Pancreas (tissue), 10 donors: ENCODE measurements at regions of chr2 and their contacts with region 1.

Region 1: GRCh38 chr2:13006829-13007717 is 290.3 kb downstream of the TRIB2 start:
- DNase-seq: peak in 4 of 6 donors; percentile 26 to 68 (median 32)
- ATAC-seq: peak; percentile 84 to 96 (median 92)
- H3K4me3 ChIP-seq: no peak overlapping the region
- H3K27ac ChIP-seq: no peak overlapping the region
- H3K4me1 ChIP-seq: peaks cover 0 to 12% (median 4%) of the 10 kb centered on the region in 3 donors
- H3K27me3 ChIP-seq: no peaks in the 10 kb centered on the region
- CTCF ChIP-seq: peak; percentile 64 to 91 (median 85)

Region 2: GRCh38 chr2:11829947-11830707 is 1176.9 kb before region 1 on chr2:
- intact Hi-C with region 1: loop called in 1 of 3 experiments (anchors 10 kb)
- DNase-seq: peak in 5 of 6 donors; percentile 25 to 72 (median 63)
- ATAC-seq: peak; percentile 67 to 91 (median 88)
- H3K4me3 ChIP-seq: peak overlapping the region in 2 of 4 donors; percentile 6 to 8
- H3K27ac ChIP-seq: peak overlapping the region; percentile 13 to 84 (median 64)
- H3K4me1 ChIP-seq: peaks cover 12 to 22% (median 21%) of the 10 kb centered on the region in 3 donors
- H3K27me3 ChIP-seq: no peaks in the 10 kb centered on the region
- CTCF ChIP-seq: no peak

Region 3: DNA sequence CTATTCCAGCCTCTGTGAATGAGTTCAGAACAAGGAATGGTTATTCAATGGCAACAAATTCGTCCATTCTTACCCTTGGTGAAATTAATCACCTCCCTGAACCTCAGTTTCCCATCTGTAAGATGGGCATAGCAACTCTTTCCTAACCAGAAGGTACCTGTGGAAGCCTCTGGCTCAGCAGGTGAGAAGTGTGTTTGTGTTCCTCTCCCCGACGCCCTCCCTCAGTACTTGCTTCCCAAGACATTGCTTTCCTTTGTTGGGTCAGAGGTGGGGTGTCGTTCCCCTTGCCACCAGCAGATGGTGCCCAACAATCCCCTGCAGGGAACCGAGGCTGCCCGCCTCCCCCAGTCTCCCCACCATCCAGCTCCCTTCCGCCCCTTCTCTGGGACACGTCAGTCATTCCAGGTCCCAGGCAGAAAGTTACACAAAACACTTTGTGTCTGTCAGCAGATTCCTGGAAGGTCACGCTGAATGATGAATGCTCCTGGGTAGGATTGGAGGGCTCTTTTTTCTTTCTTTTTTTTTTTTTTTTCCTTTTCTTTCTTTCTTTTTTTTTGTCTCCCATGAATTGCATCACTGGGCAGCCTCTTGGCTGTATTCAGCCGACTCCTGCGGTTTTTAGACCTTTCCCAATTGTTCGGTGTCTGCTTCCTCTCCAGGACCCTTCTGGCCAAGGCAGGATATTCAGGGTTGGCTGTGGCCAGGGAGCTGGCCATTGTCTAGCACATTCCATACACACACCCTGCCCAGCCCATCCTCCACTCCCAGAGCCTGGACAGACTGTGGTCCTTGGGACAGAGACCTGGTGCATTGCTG is 1143.4 kb before region 1 on chr2:
- intact Hi-C with region 1: loop called in 1 of 3 experiments (anchors 10 kb)
- DNase-seq: peak; percentile 61 to 84 (median 78)
- ATAC-seq: peak; percentile 87 to 98 (median 98)
- H3K4me3 ChIP-seq: no peak overlapping the region
- H3K27ac ChIP-seq: no peak overlapping the region
- H3K4me1 ChIP-seq: peaks cover 0 to 3% (median 0%) of the 10 kb centered on the region in 3 donors
- H3K27me3 ChIP-seq: no peaks in the 10 kb centered on the region
- CTCF ChIP-seq: peak; percentile 80 to 92 (median 89)